Aorta (tissue), 5 donors: ENCODE measurements at regions of chr18 and their contacts with region 1.

Region 1: DNA sequence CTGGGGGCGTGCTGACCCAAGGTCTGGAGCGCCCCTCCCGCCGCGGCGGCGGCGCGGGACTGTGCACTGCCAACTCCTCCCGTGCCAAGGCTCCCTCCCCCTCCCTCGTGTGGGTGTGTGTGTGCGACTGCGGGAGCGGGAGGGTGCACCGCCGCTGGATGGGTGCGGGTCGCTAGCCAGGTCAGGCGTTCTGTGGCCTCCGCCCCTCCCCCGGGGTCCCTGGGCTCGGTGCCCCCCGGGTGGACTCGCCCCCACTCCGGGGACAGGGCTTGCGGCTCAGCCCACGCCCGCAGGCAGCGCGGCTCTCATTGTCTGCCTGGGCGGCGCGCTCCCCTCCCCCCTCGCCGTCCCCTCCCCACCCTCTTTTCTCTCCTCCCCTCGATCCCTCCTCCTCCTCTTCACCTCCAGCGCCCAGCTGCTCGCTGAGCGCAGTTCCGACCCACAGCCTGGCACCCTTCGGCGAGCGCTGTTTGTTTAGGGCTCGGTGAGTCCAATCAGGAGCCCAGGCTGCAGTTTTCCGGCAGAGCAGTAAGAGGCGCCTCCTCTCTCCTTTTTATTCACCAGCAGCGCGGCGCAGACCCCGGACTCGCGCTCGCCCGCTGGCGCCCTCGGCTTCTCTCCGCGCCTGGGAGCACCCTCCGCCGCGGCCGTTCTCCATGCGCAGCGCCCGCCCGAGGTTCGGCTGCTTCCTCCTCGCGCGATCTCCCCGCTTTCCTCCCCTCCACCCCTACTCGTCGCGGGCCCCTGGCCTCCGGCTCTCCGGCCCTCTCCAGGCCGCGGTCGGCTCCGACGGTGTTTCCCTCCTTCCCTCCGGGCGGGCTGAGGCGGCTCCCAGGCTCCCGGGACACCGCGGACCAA is at the start of gene GATA6:
- DNase-seq: peak; percentile 95 to 96
- ATAC-seq: peak; percentile 88
- H3K4me3 ChIP-seq: peak within 1 kb of the TSS; percentile 81 to 85
- H3K27ac ChIP-seq: peak within 1 kb of the TSS; percentile 64 to 93
- H3K4me1 ChIP-seq: no peaks in the 10 kb centered on the region
- H3K27me3 ChIP-seq: no peaks in the 10 kb centered on the region
- total RNA-seq, gene GATA6: 28.7 to 41.5 TPM

Region 2: DNA sequence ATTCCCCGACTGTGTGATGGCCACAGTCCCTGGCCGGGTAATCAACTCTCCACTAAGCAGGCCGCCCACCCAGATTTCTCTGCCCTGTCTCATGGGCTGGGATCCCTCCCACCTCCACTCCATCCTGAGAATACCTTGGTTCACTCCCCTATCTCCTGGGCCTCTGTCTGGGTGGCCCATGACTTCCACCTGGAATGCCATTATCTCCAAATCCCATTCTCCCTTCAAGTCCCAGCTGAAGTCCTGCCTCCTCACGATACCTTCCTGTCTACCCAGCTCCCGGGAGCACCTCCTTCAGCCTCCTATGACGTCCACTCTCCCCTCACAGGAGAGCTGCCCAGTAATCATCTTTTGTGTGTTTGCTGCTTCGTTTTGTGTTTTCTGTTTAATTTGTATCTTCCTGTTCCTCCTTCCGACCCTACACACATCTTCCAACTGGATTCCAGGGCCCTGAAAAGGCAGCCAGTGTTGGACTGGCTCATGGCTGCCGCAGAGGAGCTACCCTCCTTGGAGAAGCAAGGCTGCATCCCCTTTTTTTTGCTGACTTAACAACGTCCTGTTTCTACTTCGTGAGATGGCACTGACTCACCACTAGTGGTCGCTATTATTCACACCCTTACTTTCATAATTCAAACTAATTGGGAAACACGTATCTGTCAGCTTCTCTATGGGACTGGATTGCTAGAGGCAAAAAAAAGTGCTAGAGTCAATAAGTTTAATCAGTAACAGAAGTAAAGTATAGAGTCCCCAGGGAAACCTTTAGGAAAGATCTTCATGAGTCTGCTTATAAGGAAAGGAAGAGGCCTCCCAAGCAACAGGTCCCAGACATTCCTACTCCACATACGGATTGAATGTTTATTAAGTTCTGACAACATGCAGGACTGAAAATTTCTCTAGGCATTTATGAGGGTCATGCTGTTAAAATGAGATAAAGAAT is 171.8 kb before region 1 on chr18:
- intact Hi-C with region 1: loop called (anchors 2 to 10 kb)
- DNase-seq: no peak
- ATAC-seq: peak; percentile 47
- H3K4me3 ChIP-seq: no peak overlapping the region
- H3K27ac ChIP-seq: no peak overlapping the region
- H3K4me1 ChIP-seq: no peaks in the 10 kb centered on the region
- H3K27me3 ChIP-seq: no peaks in the 10 kb centered on the region

Region 3: DNA sequence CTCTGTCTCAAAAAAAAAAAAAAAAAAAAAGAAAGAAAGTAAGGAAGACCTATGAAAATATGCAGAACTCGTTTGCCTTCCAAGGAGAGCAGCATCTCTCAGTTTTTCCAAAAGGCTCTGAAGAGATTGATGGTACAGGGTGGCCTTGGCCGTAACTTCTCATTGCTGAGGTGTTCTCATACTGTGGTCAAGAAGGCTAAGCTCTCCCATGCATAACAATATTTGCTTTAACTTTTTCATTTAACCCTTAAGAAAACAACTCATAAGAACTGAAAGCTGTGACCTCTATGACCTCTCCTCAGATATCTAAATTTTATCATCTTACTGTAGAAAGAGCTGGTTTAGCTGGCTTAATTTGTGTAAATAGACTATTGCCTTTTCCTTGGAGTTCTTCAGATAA is 37.0 kb before region 1 on chr18:
- intact Hi-C with region 1: no loop called
- DNase-seq: no peak
- ATAC-seq: no peak
- H3K4me3 ChIP-seq: no peak overlapping the region
- H3K27ac ChIP-seq: no peak overlapping the region
- H3K4me1 ChIP-seq: no peaks in the 10 kb centered on the region
- H3K27me3 ChIP-seq: no peaks in the 10 kb centered on the region

Region 4: DNA sequence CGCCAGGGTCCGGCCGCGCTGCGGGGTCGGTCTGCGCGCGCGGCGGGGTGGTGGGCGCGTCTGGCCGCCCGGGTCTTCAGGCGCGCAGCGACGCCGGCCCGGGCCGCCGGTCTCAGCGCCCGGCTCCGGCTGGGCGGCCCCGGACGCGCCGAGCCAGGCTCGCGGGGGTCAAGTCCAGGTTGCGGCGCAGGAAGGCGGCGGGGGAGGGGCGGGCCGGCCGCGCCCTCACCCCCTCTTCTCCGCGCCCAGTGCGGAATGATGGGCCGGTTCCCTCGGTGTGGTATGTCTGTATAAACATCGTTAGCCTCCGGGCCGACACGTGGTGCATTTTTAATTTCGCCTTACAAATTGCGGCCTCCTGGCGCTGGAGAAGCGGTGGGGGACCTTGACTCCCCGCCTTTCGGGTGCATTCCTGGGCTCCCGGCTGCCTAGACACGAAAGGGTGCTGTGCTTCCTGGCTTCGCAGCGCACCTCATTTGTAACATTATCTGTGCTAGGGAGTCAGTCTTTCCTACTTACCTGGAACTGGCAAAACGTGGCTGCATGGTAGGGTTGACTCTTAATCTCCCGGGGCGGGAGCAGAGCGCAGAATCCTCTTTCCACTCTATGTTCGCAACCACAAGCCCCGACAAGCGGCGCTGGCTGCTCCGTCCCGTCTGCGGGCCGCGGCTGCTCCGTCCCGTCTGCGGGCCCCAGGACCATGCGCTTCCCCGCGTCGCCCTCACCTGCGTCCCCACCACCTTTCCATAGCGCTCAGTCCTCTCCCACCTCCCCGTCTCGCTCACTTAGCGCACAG is 179.5 kb after region 1 on chr18:
- intact Hi-C with region 1: loop called (anchors 5 kb)
- DNase-seq: peak; percentile 73 to 85
- ATAC-seq: peak; percentile 77
- H3K4me3 ChIP-seq: peak overlapping the region; percentile 48 to 72
- H3K27ac ChIP-seq: peak overlapping the region; percentile 99
- H3K4me1 ChIP-seq: peaks cover 0 to 2% of the 10 kb centered on the region in 2 donors
- H3K27me3 ChIP-seq: no peaks in the 10 kb centered on the region

Region 5: DNA sequence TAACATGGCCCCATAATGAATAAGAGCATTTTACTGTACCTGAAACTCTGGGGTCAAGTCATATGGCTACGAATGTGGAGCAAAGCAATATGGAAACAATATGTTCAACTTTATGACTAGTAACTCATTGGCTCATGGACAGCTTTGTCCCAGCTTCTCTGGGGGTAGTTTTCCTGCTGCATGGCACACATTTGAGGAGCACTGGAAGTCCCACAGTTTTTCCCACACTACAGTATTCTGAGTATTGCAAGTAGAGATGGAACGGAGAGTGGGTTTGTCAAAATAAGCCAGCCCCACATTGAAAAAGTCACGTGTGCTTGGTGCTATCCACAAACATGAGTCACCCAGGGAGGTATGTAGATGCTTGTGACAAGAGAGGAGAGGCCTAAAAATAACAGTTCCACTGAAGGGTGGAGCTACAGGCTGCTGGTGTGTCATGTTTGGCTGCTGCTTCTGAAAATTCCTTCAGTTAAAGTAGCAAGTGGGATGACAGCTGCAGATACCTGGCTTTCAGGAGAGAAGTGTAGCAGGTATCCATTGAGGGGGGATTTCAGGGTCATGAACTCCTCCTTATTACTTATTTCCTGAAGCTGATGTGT is 296.7 kb after region 1 on chr18:
- intact Hi-C with region 1: loop called (anchors 5 kb)
- DNase-seq: peak in 1 of 2 donors; percentile 65
- ATAC-seq: peak; percentile 89
- H3K4me3 ChIP-seq: no peak overlapping the region
- H3K27ac ChIP-seq: peak overlapping the region; percentile 72 to 100
- H3K4me1 ChIP-seq: peaks cover 4 to 8% of the 10 kb centered on the region in 2 donors
- H3K27me3 ChIP-seq: no peaks in the 10 kb centered on the region

Region 6: DNA sequence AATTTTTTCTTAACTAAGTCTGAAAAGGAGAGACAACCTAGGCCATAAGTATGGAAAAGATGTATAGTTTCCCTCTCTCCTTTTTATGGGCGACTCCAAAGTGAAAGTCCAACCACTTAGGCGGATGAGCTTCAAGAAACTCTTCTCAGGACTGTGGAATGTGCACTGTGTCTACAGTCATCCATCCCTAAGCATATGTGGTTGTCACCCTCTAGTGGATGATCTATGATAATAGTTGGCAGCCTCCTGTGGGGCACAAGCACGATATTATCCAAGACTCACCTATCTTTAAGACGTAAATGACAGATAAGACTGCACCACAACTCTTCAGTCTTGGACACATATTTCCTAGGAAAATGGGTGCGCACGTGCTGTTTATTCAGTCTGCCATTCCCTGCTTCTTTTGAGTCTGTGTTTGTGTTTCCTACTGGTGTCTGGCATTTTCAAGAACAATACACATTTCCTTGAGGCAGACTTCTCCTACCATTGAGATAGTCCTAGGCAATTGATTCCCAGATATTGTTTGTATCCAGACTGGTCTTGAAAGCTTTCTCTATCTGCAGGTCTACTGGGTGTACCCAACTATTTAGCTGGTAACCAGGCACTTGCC is 394.0 kb after region 1 on chr18:
- intact Hi-C with region 1: loop called (anchors 1 to 2 kb)
- DNase-seq: no peak
- ATAC-seq: peak; percentile 83
- H3K4me3 ChIP-seq: peak overlapping the region in 1 of 2 donors; percentile 21
- H3K27ac ChIP-seq: peak overlapping the region in 1 of 2 donors; percentile 25
- H3K4me1 ChIP-seq: peaks cover 0 to 5% of the 10 kb centered on the region in 2 donors
- H3K27me3 ChIP-seq: no peaks in the 10 kb centered on the region

Region 7: DNA sequence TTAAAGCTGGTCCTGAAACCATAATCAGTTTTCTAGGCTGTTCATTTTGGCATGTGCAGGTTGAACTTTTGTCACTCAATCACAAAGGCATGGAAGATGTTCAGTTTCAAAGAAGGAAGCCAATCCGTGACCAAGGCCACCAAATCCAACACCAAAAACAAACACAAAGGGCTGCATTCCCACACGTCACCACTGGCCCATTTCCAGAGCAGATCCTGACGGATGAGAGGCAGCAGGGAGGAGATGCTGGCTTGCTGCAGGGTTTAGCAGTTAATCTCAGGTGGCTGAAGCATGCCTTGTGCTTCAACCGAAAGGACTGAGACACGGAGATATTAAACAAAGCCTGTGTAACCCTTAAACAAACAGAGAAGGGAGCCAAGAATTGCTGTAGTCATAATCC is 440.4 kb after region 1 on chr18:
- intact Hi-C with region 1: loop called in 1 of 2 experiments (anchors 5 kb)
- DNase-seq: peak; percentile 83 to 88
- ATAC-seq: peak; percentile 26
- H3K4me3 ChIP-seq: no peak overlapping the region
- H3K27ac ChIP-seq: peak overlapping the region; percentile 30 to 60
- H3K4me1 ChIP-seq: peaks cover 5 to 10% of the 10 kb centered on the region in 2 donors
- H3K27me3 ChIP-seq: no peaks in the 10 kb centered on the region

Region 8: GRCh38 chr18:22710628-22711380 is 541.6 kb after region 1 on chr18:
- intact Hi-C with region 1: loop called in 1 of 2 experiments (anchors 5 kb)
- DNase-seq: peak; percentile 77 to 84
- ATAC-seq: peak; percentile 67
- H3K4me3 ChIP-seq: peak overlapping the region; percentile 5 to 49
- H3K27ac ChIP-seq: peak overlapping the region; percentile 20 to 22
- H3K4me1 ChIP-seq: peaks cover 0 to 7% of the 10 kb centered on the region in 2 donors
- H3K27me3 ChIP-seq: no peaks in the 10 kb centered on the region